ENCODE measurements at regions of chr11 and their contacts with region 1.

Region 1: GRCh38 chr11:125345421-125346178 is 150.5 kb downstream of the FEZ1 start:
- DNase-seq: peak; percentile 82
- H3K4me3 ChIP-seq: no peak overlapping the region
- H3K27ac ChIP-seq: no peak overlapping the region
- H3K27me3 ChIP-seq: no peaks in the 10 kb centered on the region
- CTCF ChIP-seq: peak; percentile 91

Region 2: GRCh38 chr11:125164422-125165110 is 181.0 kb before region 1 on chr11 and contains the start of gene PKNOX2:
- in situ Hi-C with region 1: loop called (anchors 25 kb)
- DNase-seq: peak; percentile 58
- H3K4me3 ChIP-seq: peak within 1 kb of the TSS; percentile 88
- H3K27ac ChIP-seq: peak within 1 kb of the TSS; percentile 51
- H3K27me3 ChIP-seq: no peaks in the 10 kb centered on the region
- CTCF ChIP-seq: peak; percentile 68